ENCODE measurements at regions of chr10 and their contacts with region 1.

Region 1: GRCh38 chr10:80444646-80445319 is 9.3 kb upstream of the TSPAN14 start:
- DNase-seq: peak; percentile 76
- CTCF ChIP-seq: peak; percentile 81

Region 2: DNA sequence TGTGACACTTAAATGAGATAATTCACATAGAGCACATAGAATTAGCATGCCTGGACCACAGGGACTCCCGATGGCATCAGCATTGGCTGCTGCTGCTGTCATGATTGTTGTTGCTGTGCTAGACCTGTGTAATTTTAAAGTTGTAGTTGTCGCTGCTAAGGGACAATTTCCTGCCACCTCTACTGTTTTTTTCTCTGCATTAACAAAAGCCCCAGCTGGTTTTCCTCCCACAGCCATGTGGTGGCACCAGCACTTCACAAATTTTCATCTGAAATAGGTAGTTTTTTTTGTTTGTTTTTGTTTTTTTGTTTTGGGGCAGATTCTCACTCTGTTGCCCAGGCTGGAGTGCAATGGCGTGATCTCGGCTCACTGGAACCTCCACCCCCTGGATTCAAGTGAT is 61.8 kb before region 1 on chr10:
- CTCF ChIA-PET with region 1: interaction called, 22 read pairs
- POLR2A ChIA-PET with region 1: no interaction called
- DNase-seq: peak; percentile 58
- CTCF ChIP-seq: peak; percentile 60

Region 3: DNA sequence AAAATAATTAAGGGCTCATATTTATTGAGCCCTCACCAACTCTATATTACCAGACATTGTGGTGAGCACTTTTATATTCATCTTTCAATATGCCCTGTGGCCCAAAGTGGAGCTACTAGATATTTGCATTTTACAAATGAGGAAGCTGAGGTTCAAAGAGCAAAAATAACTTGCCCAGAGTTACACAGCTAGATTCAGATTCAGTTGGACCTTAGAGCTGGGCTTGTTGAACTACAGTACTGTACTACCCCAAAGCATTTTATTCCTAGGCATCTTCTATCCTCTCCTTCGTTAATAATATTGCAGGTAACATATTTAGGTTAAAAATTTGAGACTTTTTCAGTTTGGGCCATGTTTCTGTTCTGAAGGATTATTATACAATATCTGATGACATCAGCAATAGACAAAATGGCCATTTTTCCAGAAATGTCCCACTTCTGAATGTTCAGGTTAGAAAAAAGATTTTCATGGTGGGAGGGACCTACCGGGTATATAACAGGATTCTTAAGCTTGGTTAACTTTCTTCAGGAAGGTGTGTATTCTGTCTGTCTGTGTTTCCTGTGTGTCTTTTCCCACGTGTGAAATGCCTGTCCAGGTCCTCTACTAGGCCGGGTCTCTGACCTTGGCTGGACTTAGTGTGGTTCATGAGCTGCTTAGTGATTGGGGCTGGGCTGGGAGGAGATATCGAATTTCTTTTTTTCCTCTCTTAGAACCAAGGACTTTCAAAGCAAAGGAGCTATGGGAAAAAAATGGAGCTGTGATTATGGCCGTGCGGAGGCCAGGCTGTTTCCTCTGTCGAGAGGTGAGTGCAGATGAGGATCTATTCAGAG is 22.9 kb before region 1 on chr10:
- CTCF ChIA-PET with region 1: interaction called, 62 read pairs
- POLR2A ChIA-PET with region 1: no interaction called
- DNase-seq: peak; percentile 55
- CTCF ChIP-seq: no peak

Region 4: GRCh38 chr10:80459047-80459931 is 14.5 kb after region 1 on chr10:
- CTCF ChIA-PET with region 1: interaction called, 55 read pairs
- POLR2A ChIA-PET with region 1: interaction called, 3 read pairs
- DNase-seq: peak; percentile 73
- CTCF ChIP-seq: no peak

Region 5: DNA sequence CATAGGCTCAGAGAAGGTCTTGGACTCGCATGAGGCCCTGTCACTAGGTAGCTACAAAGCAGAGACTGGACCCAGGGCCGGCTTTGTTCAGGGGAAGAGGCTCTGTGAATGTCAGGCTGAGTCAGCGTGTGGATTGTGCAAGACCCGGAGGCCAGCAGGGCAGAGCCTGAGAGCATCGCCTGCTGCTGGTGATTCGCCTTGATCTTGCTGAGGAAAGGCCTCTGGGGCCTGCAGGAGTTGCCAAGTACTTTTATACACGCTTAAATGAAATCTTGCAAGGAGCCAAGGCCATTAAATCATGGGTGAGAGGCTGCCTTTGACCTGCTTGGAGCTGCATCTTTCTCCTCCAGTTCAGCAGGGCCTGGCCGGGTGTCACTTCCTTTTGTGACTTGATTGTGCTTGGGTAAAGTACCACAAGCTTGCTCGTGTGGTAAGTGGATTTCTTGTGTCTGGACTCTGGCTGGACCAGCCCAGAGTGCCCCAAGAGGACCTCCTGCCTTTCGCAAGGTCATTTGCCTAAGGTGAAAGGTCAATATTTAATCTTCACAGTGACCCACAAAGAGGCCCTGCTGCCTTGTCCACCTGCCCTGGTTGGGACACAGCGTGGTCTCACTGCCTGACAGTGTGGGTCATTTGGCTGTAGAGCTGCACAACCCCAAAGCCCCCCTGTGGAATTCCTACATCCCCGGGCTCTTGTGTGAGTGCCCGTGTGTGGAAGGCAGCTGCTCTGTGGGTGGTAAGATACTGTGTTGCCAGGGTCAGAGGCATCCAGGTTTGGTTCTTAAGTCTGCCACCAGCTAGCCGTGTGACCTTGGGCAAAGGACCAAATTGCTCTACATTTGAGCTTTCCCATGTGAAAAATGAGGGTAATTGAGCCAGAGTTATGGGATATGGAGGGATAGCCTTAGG is 54.3 kb after region 1 on chr10:
- CTCF ChIA-PET with region 1: interaction called, 1,060 read pairs
- POLR2A ChIA-PET with region 1: no interaction called
- DNase-seq: no peak
- CTCF ChIP-seq: no peak

Measured in GM10248 (cell line).